Prostate gland (tissue), 2 donors: ENCODE measurements at regions of chr4 and their contacts with region 1.

Region 1: DNA sequence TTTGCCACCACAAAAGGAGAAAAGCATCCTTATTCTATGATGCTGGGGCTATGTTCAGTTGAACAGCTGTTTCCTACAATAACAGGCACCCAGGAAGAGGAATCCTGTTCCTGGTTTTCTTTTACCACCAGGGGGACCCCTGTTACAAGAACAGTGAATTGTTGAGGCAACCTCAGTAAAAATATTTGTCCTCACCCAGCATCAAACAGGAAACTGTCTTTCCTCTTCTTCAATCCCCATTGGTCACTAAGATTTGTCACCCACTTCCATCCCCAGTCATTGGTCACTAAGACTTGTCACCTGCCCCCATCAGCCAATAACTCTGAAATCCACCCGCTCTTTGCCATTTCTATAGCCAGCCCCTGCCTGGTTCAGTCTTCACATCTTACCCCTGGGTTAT is 143.5 kb upstream of the GALNT7 start:
- DNase-seq: peak; percentile 64
- H3K4me3 ChIP-seq: no peak overlapping the region
- H3K27ac ChIP-seq: no peak overlapping the region
- H3K4me1 ChIP-seq: peaks cover 4% of the 10 kb centered on the region
- H3K27me3 ChIP-seq: no peaks in the 10 kb centered on the region
- CTCF ChIP-seq: peak; percentile 65 to 81 (median 78)
- POLR2A ChIP-seq: no peak

Region 2: GRCh38 chr4:172758586-172759340 is 266.4 kb before region 1 on chr4:
- intact Hi-C with region 1: no loop called
- DNase-seq: no peak
- H3K4me3 ChIP-seq: no peak overlapping the region
- H3K27ac ChIP-seq: no peak overlapping the region
- H3K4me1 ChIP-seq: no peaks in the 10 kb centered on the region
- H3K27me3 ChIP-seq: no peaks in the 10 kb centered on the region
- CTCF ChIP-seq: no peak
- POLR2A ChIP-seq: no peak

Region 3: GRCh38 chr4:173257732-173258717 is 232.9 kb after region 1 on chr4:
- intact Hi-C with region 1: loop called (anchors 5 kb)
- DNase-seq: peak; percentile 50
- H3K4me3 ChIP-seq: no peak overlapping the region
- H3K27ac ChIP-seq: no peak overlapping the region
- H3K4me1 ChIP-seq: no peaks in the 10 kb centered on the region
- H3K27me3 ChIP-seq: no peaks in the 10 kb centered on the region
- CTCF ChIP-seq: peak in 3 of 4 experiments; percentile 45 to 67 (median 64)
- POLR2A ChIP-seq: no peak